ENCODE measurements at regions of chr19 and their contacts with region 1.

Region 1: GRCh38 chr19:925526-926322 is at the start of gene ARID3A:
- DNase-seq: peak; percentile 82 to 93 (median 88)
- ATAC-seq: peak; percentile 83
- H3K4me3 ChIP-seq: peak within 1 kb of the TSS; percentile 79 to 94
- H3K27ac ChIP-seq: peak within 1 kb of the TSS; percentile 84 to 98
- H3K4me1 ChIP-seq: peaks cover 5 to 54% of the 10 kb centered on the region in 2 donors
- H3K27me3 ChIP-seq: peaks cover 7 to 8% of the 10 kb centered on the region in 2 donors
- CTCF ChIP-seq: no peak
- polyA plus RNA-seq, gene ARID3A: 20.6 to 30.5 (median 23.6) TPM

Region 2: DNA sequence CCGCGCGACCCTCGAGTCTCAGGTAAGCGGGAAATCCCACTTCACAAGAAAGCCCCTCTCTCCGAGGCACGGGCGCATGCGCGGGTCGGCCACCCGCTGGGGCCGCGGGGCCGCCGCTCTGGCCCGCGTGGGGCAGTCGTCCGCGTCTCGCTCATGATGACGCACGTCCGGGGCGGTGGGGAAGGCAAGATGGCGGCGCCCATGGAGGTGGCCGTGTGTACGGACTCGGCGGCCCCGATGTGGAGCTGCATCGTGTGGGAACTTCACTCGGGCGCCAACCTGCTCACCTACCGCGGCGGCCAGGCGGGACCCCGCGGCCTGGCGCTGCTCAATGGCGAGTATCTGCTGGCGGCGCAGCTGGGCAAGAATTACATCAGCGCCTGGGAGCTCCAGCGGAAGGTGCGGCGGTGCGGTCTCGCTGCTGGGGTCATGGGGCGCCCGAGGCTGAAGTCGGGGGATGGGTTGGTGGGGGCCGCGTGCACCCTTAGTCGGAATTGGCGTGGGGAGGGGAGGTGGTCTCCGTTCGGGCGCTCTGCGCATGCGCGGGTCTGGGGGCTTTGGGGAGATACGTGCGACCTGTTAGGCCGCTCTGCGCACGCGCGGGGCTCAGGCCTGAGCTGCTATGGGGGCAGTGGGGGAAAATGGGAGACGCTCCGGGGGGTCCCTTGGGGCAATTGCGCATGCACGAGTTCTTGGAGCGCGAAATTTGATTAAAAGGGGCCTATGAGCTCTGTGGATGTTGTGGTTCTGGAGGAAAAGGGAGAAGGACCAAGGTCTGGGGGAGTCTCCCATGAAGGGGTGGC is 58.6 kb after region 1 on chr19 and contains the start of gene WDR18:
- intact Hi-C with region 1: loop called (anchors 2 to 5 kb)
- DNase-seq: peak; percentile 87 to 99 (median 94)
- ATAC-seq: peak; percentile 96
- H3K4me3 ChIP-seq: peak within 1 kb of the TSS; percentile 77 to 91
- H3K27ac ChIP-seq: peak within 1 kb of the TSS; percentile 70 to 77
- H3K4me1 ChIP-seq: peaks cover 7 to 39% of the 10 kb centered on the region in 2 donors
- H3K27me3 ChIP-seq: no peaks in the 10 kb centered on the region
- CTCF ChIP-seq: peak in 1 of 2 donors; percentile 56
- polyA plus RNA-seq, gene WDR18: 26.6 to 35.9 (median 34.1) TPM

Region 3: DNA sequence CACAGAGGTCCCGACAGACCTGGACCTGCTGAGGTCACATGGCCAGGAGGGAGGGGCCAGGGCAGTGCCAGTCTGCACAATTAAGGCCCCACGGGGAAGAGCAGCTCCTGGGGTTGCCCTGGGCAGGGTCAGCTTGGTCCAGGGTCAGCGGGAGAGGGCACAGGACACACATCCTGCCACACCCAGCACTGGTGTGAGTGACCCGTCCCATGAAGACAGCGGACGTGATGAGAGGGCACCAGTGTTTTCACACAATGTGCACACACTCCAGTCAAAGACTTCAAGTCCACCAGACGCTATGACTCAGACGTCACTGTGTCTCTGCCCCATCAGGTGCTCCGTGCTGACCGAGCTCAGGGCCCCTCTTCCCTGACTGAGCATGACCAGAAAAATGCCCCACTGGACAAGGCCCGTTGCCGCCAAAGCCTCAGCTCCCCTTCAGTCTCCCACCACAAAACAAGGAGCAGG is 91.0 kb after region 1 on chr19:
- intact Hi-C with region 1: no loop called
- DNase-seq: peak in 1 of 4 donors; percentile 65
- ATAC-seq: peak; percentile 1
- H3K4me3 ChIP-seq: no peak overlapping the region
- H3K27ac ChIP-seq: peak overlapping the region; percentile 35 to 51
- H3K4me1 ChIP-seq: peaks cover 43 to 55% of the 10 kb centered on the region in 2 donors
- H3K27me3 ChIP-seq: no peaks in the 10 kb centered on the region
- CTCF ChIP-seq: no peak

Measured in left lung (tissue), 14 donors.